Posterior cingulate gyrus (tissue), 11 donors: ENCODE measurements at regions of chr4 and their contacts with region 1.

Region 1: DNA sequence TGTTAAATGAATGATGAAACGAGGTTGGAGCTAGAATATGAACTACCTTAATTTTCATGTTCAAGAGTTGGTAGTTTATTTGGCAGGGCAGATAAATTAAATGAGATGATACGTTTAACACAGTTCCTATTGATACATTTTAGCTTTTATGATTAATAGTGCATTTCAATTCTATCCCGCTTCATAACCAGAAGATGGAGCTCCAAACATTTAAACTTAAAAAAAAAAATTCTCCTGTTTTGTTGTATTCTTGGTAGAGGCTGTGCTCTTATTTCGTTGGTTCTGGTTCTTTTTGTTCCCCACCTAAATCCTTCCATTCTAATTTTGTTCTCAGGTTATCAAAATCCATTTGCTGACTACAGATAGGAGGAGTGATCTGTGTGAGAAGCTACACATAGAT is 71.8 kb upstream of the PTPN13 start:
- DNase-seq: no peak

Region 2: GRCh38 chr4:85928775-85929591 is 593.4 kb before region 1 on chr4:
- intact Hi-C with region 1: no loop called
- DNase-seq: no peak

Region 3: DNA sequence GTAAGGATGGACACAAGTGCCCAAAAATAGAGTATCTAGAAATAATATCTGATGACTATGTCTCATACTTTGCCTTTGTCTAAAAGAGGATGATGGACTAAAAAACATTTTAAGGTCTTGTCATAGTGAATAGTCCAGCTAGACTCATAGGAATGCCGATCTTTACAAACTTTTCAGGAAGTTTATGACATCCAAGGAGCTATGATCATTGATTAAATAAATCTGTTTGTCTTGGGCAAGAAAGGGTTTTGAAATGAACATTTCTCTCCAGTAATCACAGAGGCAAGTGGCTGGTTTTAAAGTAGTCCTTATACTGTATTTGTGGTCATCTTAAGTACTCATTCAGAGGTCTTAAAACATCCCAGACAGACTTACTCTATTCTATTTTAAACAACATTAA is 272.3 kb before region 1 on chr4:
- intact Hi-C with region 1: no loop called
- DNase-seq: no peak

Region 4: DNA sequence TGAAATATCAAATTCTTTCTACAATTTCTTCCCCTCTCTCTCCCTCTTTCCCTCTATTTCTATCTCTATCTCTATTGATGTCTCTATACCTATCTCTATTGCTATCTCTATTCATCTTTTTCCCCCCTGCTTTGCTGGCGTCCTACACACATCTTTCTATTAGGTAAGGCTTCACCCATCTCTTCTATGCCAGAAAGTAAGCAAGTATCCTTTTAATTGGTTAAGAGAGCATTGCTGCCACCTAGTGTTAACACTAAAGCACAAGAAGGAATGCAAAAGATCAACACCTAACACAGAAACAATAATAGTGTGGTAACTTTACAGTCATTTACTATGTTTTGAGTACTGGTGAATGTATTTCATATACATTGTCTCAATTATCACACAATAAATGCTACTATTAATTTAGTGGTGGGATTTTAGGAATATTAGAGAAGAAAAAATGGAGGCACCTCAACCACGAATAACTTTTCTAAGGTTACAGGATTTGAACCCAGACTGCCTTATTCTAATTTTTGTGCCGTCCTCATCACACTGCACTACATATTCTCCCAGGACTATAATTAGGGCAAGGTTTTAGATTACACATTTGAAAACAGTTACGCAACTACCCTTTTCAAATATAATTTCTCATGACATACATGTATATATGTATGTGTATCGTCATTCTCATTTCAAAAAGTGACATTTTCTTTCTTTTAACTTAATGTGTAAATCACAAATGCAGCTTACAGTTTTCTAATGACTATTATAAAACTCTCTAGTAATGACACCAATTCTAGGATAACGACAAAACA is 373.5 kb after region 1 on chr4:
- intact Hi-C with region 1: loop called (anchors 1 kb)
- DNase-seq: no peak